ENCODE measurements at regions of chr11 and their contacts with region 1.

Region 1: DNA sequence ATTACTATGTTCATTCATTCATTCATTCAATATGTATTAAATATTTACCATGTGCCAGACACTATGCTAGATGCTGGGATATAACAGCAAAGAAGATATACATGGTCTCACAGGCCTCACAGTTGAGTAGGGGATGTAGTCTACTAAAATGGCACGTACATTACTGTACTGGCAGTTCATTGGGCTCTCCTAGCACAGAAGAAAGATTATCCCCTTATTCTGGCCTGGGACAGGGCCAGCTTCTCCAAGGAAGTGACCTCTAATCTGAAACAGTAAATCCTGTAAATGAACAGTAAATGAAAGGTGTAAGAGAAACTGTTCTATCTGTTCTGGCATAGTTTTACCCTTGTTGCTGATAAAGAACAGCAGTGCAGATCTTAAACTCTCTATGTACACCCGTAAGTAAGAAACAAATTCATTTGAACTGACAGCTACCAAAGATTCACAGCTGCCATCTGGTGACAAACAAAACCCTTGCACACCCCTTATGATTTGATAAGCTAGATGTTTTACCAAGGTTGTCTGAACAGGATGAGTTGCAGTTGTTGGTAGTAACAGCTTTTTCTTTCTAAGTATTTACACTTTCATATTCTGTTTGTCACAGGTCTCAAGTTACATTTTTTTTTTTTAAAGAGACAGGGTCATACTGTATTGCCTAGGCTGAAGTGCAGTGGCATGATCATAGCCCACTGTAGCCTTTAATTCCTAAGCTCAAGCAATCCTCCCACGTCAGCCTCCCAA is 263.1 kb downstream of the TMEM135 start:
- DNase-seq: no peak
- H3K4me3 ChIP-seq: no peak overlapping the region
- H3K27ac ChIP-seq: no peak overlapping the region
- H3K4me1 ChIP-seq: peaks cover 0 to 3% of the 10 kb centered on the region in 2 experiments; a peak in 3 of 4 replicates
- H3K27me3 ChIP-seq: no peaks in the 10 kb centered on the region
- CTCF ChIP-seq: no peak
- EP300 ChIP-seq: no peak
- RAD21 ChIP-seq: no peak

Region 2: DNA sequence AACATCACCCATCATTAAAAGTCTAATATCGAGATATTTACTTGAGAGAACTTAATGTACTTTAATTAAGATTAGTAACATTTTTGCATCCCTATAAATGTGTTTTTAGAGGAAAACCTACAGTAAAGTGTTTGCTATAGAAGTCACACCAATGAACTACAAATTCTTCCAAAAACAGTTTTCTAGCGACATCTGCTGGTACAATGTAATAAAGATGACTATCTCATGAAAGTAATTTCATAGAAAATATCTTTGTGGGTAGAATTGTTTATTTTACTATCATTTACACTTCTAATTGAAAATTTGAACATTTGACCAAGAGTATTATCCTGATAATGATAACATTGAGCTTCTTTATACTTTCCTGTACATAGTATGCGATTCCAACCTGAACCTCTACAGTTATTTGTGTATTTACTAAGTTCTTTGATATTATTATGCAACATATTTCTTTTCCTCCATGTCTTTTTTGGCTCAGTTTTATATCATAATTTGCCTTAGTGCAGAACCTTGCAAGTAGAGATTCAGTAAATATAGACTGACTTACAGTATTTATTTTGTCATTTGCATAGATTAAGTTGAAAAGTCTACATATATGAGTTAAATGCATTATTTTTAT is 10.4 kb before region 1 on chr11:
- CTCF ChIA-PET with region 1: interaction called, 24 read pairs
- POLR2A ChIA-PET with region 1: no interaction called
- DNase-seq: peak; percentile 50
- H3K4me3 ChIP-seq: no peak overlapping the region; a peak in 1 of 4 replicates
- H3K27ac ChIP-seq: no peak overlapping the region
- H3K4me1 ChIP-seq: no peaks in the 10 kb centered on the region; a peak in 1 of 4 replicates
- H3K27me3 ChIP-seq: no peaks in the 10 kb centered on the region
- CTCF ChIP-seq: peak; percentile 81
- EP300 ChIP-seq: no peak
- RAD21 ChIP-seq: peak; percentile 88